GM23248 (cell line): ENCODE measurements at regions of chr16 and their contacts with region 1.

Region 1: DNA sequence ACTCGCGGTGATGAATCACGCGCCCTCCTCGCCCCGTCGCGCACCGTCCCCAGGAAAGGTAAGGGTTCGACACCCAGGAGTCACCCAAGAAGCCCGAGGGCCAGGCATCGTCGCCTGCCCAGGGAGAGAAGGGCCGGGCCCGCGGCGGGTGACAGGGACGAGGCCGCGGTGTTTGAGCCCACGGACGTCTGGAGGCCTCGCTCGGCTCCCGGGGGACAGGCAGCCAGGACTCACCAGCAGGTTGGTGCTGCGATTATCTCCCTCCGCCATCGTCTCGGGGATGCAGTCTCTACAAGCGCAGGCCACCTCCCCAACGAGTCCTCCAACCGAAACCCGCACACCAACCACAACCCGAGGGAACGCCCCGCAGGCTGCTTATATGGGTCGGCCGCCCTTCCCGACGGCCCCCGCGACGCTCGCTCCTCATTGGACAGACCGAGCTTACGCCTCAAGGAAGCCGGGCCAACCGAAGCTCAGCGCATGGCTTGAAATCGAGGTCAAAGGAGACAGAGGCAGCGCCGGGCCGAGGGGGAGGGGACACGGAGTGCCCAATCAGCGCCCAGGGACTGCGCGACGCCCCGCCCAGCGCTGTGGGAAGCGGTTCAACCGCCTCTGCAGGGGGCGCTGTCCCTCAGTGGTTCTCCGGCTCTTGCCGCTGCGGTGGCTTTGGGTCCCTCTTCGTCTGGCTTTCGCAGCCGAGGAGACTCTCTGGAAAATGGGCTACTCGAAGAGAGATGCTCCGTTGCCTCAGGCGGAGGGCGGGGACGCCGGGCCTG is at the start of gene ARL6IP1:
- DNase-seq: peak; percentile 100
- H3K4me3 ChIP-seq: peak within 1 kb of the TSS; percentile 89
- H3K27ac ChIP-seq: peak within 1 kb of the TSS; percentile 90
- H3K4me1 ChIP-seq: peaks cover 38% of the 10 kb centered on the region
- H3K27me3 ChIP-seq: no peaks in the 10 kb centered on the region
- total RNA-seq, gene ARL6IP1: 184 and 201 TPM in 2 replicates

Region 2: DNA sequence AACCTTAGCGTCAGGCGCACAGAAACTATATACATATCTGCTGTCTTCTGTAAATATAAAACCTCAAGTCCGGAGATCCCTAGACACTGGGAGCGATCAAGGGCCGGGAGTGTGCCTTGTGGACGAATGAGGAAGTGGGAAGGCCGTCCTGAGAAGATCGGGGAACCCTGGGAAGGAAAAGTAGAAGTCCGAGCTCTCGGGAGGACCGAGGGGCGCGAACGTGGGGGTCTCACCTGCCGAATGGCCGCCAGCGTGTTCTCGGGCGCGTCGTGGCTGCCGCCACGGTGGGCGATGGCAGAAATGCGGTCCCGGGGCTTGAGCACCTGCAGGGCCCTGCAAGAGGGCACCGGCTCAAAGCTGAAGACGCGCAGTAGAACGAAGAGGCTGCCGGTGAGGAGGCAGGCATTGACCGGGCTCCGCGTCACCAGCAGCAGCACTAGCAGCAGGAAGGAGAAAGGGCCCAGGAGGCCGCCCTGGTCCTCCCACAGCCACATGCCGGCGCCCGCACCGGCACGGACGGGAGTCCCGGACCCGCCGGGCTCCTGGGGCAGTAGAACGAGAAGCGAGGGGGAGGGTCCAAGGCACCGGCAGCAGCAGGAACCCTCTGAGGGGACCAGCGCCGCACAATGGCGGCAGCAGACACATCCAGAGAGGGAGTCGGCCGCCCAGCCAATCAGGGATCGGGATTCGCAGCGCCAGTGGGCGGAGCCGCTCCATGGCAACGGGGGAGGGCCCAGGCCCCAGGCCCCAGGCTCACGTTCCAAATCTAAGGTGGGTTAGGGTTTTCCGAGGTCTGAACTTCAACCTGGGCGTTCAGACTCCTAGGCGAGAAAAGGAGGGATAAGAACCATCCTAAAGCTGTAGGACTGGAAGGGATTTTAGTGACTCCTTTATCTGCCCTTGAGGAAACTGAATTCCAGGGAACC is 720.3 kb after region 1 on chr16 and contains the start of gene GDE1:
- in situ Hi-C with region 1: loop called (anchors 25 kb)
- DNase-seq: peak; percentile 97
- H3K4me3 ChIP-seq: peak within 1 kb of the TSS; percentile 81
- H3K27ac ChIP-seq: peak within 1 kb of the TSS; percentile 69
- H3K4me1 ChIP-seq: peaks cover 6% of the 10 kb centered on the region
- H3K27me3 ChIP-seq: no peaks in the 10 kb centered on the region
- total RNA-seq, gene GDE1: 77.1 and 85.0 TPM in 2 replicates